HCT116 (cell line): ENCODE measurements at regions of chr19 and their contacts with region 1.

Region 1: GRCh38 chr19:46239193-46240024 is 9.9 kb downstream of the IGFL1 start:
- DNase-seq: no peak
- ATAC-seq: no peak
- H3K4me3 ChIP-seq: no peak overlapping the region
- H3K27ac ChIP-seq: no peak overlapping the region
- H3K4me1 ChIP-seq: no peaks in the 10 kb centered on the region
- H3K27me3 ChIP-seq: peaks cover 60% of the 10 kb centered on the region
- CTCF ChIP-seq: no peak
- POLR2A ChIP-seq: no peak
- RAD21 ChIP-seq: no peak

Region 2: GRCh38 chr19:46201413-46202310 is 37.7 kb before region 1 on chr19:
- CTCF ChIA-PET with region 1: no interaction called
- POLR2A ChIA-PET with region 1: no interaction called
- RAD21 ChIA-PET with region 1: no interaction called
- intact Hi-C with region 1: no loop called
- DNase-seq: no peak
- ATAC-seq: no peak
- H3K4me3 ChIP-seq: no peak overlapping the region
- H3K27ac ChIP-seq: no peak overlapping the region
- H3K4me1 ChIP-seq: peaks cover 15 to 48% of the 10 kb centered on the region in 2 experiments
- H3K27me3 ChIP-seq: peaks cover under 1% of the 10 kb centered on the region
- CTCF ChIP-seq: no peak
- POLR2A ChIP-seq: no peak
- RAD21 ChIP-seq: no peak

Region 3: GRCh38 chr19:46256855-46257254 is 17.4 kb after region 1 on chr19:
- CTCF ChIA-PET with region 1: no interaction called
- POLR2A ChIA-PET with region 1: no interaction called
- RAD21 ChIA-PET with region 1: no interaction called
- intact Hi-C with region 1: loop called (anchors 2 kb)
- DNase-seq: no peak
- ATAC-seq: no peak
- H3K4me3 ChIP-seq: no peak overlapping the region
- H3K27ac ChIP-seq: no peak overlapping the region
- H3K4me1 ChIP-seq: peaks cover 13 to 14% of the 10 kb centered on the region in 2 experiments
- H3K27me3 ChIP-seq: peaks cover 41% of the 10 kb centered on the region; the same call in 1 of the 2 replicates
- CTCF ChIP-seq: no peak
- POLR2A ChIP-seq: no peak
- RAD21 ChIP-seq: no peak